ENCODE measurements at regions of chr12 and their contacts with region 1.

Region 1: DNA sequence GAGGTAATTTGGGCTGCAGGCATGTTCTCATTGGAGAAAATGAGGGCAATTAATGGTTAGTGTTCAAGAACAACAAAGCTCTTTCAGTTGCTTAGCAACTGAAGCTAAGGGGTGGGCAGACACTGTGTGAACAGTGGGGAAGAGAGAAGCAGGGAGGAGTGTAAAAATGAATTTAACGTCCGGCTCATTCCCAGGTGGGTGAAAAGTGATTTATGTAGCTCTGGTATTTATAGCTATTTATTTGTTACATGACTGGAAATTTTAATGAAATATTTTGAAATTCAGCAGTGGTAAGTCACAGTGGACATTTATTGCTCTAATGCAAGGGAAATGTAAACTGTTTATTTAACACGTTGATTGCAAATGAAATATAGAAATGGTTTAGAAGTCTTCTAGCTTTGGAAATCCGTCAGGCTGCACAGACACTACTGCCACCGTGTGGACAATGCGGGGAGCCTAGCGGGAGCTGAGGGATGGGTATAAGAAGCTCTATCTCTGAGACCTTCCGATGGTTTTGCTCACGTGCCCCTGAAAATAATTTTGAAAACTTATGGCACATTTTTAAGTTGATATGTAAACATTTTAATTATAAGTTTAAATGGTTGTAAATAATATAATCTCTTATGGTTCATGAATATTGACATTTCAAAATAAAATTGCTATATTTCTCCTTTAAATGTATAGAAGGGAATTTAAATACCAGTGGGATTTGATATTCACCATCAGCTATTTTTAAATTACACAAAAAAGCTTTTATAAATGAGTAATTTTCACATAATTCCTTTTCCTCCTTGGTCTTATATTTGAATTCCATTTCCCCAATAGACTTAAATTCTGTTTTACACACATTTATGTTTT is 54.4 kb downstream of the E2F7 start:
- DNase-seq: peak; percentile 29
- ATAC-seq: peak; percentile 79
- H3K4me3 Mint-ChIP-seq: no peak overlapping the region
- H3K27ac Mint-ChIP-seq: no peak overlapping the region
- H3K4me1 Mint-ChIP-seq: peaks cover 4% of the 10 kb centered on the region
- H3K27me3 Mint-ChIP-seq: peaks cover 8% of the 10 kb centered on the region
- CTCF ChIP-seq: peak; percentile 69

Region 2: DNA sequence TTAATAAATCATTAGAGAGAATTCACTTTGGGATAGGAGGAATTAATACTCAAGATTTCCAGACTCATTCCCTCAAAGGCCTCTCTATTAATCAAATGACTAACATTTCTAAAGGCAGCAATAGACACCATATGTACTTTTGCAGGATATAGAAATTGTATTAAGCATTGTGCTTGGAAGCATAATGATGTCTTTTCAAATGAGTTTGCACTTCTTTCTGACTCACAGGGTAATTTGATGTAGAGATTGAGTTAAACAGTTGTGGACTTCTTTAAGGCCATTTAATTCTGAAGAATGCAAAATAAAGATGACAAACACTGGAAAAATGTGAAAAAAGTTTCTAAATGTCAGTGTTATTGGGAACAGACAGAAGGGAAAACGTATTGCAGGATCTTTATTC is 68.7 kb before region 1 on chr12:
- CTCF ChIA-PET with region 1: no interaction called
- POLR2A ChIA-PET with region 1: no interaction called
- intact Hi-C with region 1: no loop called
- DNase-seq: no peak
- ATAC-seq: no peak
- H3K4me3 Mint-ChIP-seq: no peak overlapping the region
- H3K27ac Mint-ChIP-seq: no peak overlapping the region
- H3K4me1 Mint-ChIP-seq: no peaks in the 10 kb centered on the region
- H3K27me3 Mint-ChIP-seq: no peaks in the 10 kb centered on the region
- CTCF ChIP-seq: no peak

Region 3: GRCh38 chr12:77031745-77032144 is 20.8 kb after region 1 on chr12:
- CTCF ChIA-PET with region 1: interaction called, 14 read pairs
- POLR2A ChIA-PET with region 1: no interaction called
- intact Hi-C with region 1: no loop called
- DNase-seq: no peak
- ATAC-seq: no peak
- H3K4me3 Mint-ChIP-seq: no peak overlapping the region
- H3K27ac Mint-ChIP-seq: no peak overlapping the region
- H3K4me1 Mint-ChIP-seq: no peaks in the 10 kb centered on the region
- H3K27me3 Mint-ChIP-seq: no peaks in the 10 kb centered on the region
- CTCF ChIP-seq: no peak

Measured in activated B cell treated with CpG ODN at 0.5 μM for 24 hours (primary cell).